Motor neuron (in vitro differentiated cells): ENCODE measurements at regions of chr18 and their contacts with region 1.

Region 1: GRCh38 chr18:12947355-12948041 is at the start of gene SEH1L:
- ATAC-seq: peak; percentile 82 to 94 (median 90)
- H3K4me3 ChIP-seq: peak within 1 kb of the TSS; percentile 63 to 92 (median 84)
- H3K27ac ChIP-seq: peak within 1 kb of the TSS; percentile 93 to 97
- H3K4me1 ChIP-seq: peaks cover 5 to 11% of the 10 kb centered on the region in 2 donors
- total RNA-seq, gene SEH1L: 11.9 to 51.6 (median 22.5) TPM

Region 2: GRCh38 chr18:12408247-12408869 is 539.1 kb before region 1 on chr18:
- in situ Hi-C with region 1: loop called in 1 of 9 experiments (anchors 25 kb)
- ATAC-seq: peak in 4 of 8 experiments; percentile 1 to 12 (median 6)
- H3K4me3 ChIP-seq: peak overlapping the region; percentile 41 to 48 (median 42)
- H3K27ac ChIP-seq: peak overlapping the region; percentile 72 to 85
- H3K4me1 ChIP-seq: peaks cover 15 to 18% of the 10 kb centered on the region in 2 donors

Region 3: DNA sequence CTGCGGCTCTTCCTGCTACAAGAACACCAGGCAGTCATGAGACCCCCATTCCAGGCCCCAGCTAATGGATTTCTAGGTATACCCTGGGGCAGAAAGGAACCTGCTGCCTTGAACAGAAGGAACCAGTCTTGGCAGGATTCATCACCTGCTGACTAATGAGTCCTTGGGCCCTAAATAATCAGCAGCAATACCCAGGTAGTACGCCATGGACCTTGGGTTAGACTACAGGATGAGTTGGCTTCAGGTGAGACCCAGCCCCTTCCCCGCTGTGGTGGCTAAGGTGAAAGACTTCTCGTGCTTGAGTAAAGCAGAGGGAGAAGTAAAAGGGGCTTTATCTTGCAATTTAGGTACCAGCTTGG is 394.6 kb before region 1 on chr18:
- in situ Hi-C with region 1: no loop called
- ATAC-seq: no peak
- H3K4me3 ChIP-seq: no peak overlapping the region
- H3K27ac ChIP-seq: no peak overlapping the region
- H3K4me1 ChIP-seq: no peaks in the 10 kb centered on the region

Region 4: DNA sequence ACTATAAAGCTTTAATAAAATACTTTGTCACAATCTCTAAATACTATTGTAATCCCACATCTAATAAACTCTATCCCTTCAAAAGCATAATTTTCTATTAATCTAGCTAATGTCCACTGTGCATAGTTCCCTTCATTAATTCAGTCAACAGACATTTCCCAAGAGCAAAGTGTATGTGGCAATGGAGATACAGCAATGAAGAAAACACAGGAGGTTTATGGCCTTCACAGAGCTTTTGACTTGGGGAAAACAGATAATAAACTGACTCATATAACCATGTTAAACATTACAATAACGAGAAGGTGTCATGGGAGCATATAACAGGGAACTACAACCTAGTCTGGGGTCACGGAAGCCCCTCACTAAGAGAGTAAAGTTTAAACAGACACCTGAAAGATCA is 375.9 kb before region 1 on chr18:
- in situ Hi-C with region 1: no loop called
- ATAC-seq: no peak
- H3K4me3 ChIP-seq: no peak overlapping the region
- H3K27ac ChIP-seq: no peak overlapping the region
- H3K4me1 ChIP-seq: no peaks in the 10 kb centered on the region

Region 5: DNA sequence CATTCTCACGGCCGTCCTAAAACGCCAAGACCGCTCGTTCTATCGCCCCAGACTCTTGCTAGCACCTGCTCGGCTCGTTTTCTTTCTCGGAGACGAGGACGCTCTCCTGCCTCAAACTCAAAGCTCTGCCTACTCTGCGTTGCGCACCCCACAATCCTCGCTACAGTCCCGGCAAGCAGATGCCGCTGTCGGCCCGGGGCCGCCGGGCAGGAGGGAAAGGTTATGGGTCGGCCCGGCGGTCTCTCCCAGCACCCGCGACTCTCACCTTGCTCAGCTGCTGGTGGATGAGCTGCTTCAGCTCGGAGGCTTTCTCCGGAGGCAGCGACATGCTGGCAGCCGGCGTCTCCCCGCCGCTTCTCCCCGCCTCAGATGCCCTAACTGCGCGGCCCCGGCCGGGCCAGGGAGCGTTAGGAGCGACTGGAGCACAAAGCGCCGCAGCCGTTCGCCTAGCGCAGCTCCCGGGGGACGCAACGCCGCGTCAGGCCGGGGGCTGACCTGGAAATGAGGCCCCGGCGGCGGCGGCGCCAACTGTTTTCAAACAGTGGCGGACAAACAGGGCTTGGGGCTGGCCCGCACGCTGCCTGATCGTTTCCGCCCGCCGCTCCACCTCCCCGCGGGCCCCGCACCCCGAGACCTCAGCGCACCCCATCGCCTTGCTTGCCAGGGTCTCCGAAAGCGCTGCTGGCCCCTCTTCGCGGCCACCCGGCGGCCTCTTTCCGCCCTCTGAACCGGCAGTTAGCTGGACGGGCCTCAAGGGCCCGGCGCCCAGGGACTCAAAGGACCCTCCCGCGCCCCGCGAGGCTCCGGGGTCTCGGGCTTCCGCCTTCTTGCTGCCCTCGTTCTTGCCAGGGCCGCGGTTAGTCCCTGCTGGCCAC is 245.0 kb before region 1 on chr18 and contains the starts of genes CEP76 and PSMG2:
- in situ Hi-C with region 1: loop called in 1 of 9 experiments (anchors 25 kb)
- ATAC-seq: peak; percentile 86 to 96 (median 94)
- H3K4me3 ChIP-seq: peak within 1 kb of the TSS; percentile 92 to 100 (median 94)
- H3K27ac ChIP-seq: peak within 1 kb of the TSS; percentile 100
- H3K4me1 ChIP-seq: peaks cover 12 to 20% of the 10 kb centered on the region in 2 donors
- total RNA-seq, gene CEP76: 6.8 to 16.0 (median 9.8) TPM
- total RNA-seq, gene PSMG2: 50.4 to 82.0 (median 65.2) TPM

Region 6: GRCh38 chr18:12726774-12727550 is 220.5 kb before region 1 on chr18:
- in situ Hi-C with region 1: loop called in 3 of 9 experiments (anchors 25 kb)
- ATAC-seq: peak; percentile 25 to 80 (median 64)
- H3K4me3 ChIP-seq: no peak overlapping the region
- H3K27ac ChIP-seq: no peak overlapping the region
- H3K4me1 ChIP-seq: no peaks in the 10 kb centered on the region